Mammary epithelial cell (primary cell): ENCODE measurements at regions of chr21 and their contacts with region 1.

Region 1: DNA sequence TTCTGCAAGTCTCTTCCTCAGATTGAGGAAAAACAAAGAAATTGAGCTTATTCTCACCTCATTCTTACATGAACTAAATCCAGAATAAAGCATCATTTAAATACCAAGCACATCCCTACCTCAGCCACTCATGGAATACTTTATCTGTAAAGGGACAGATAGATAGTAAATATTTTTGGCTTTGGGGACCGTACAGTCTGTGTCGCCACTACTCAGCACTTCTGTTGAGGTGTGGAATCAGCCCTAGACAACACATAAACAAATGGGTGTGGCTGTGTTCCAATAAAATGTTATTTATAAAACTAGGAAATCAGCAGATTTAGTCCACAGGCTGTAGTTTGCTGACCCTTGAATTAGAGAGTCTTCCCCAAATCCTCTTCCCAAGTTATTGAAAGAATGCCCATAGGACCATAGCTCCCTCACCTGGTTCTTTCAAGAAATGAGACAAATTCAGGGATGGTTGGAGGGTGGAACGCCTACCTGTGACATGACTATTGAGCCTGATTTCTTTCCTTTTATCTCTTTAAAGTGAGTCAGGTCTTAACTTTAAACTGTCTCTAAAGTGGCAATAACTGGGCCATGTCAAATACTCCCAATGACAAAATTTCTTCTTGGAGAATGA is 878.5 kb downstream of the USP25 start:
- DNase-seq: peak; percentile 22
- H3K4me3 ChIP-seq: no peak overlapping the region
- H3K27ac ChIP-seq: no peak overlapping the region
- H3K4me1 ChIP-seq: no peaks in the 10 kb centered on the region
- H3K27me3 ChIP-seq: no peaks in the 10 kb centered on the region
- CTCF ChIP-seq: peak; percentile 43 to 71

Region 2: DNA sequence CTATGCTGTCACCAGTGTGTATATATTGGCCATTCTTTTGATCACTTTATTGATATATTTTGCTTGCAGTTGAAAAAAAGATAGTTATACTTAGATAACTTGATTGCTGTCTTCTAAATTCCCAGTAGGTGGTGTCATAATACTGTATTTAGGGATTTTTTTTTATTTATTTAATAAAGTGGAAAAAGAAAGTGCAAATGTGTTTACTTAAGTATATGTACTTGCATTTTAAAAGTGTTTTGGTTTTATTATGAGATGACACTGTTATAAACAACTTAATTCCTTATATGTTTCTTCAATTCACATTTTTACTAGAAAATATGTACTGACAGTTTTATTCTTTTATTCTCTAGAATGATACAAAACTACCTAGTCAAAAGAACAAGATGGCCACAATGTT is 713.7 kb before region 1 on chr21:
- CTCF ChIA-PET with region 1: no interaction called
- dilution Hi-C with region 1: no loop called
- in situ Hi-C with region 1: no loop called
- intact Hi-C with region 1: loop called (anchors 10 kb)
- DNase-seq: no peak
- H3K4me3 ChIP-seq: no peak overlapping the region
- H3K27ac ChIP-seq: no peak overlapping the region
- H3K4me1 ChIP-seq: no peaks in the 10 kb centered on the region
- H3K27me3 ChIP-seq: no peaks in the 10 kb centered on the region
- CTCF ChIP-seq: peak; percentile 37 to 45

Region 3: DNA sequence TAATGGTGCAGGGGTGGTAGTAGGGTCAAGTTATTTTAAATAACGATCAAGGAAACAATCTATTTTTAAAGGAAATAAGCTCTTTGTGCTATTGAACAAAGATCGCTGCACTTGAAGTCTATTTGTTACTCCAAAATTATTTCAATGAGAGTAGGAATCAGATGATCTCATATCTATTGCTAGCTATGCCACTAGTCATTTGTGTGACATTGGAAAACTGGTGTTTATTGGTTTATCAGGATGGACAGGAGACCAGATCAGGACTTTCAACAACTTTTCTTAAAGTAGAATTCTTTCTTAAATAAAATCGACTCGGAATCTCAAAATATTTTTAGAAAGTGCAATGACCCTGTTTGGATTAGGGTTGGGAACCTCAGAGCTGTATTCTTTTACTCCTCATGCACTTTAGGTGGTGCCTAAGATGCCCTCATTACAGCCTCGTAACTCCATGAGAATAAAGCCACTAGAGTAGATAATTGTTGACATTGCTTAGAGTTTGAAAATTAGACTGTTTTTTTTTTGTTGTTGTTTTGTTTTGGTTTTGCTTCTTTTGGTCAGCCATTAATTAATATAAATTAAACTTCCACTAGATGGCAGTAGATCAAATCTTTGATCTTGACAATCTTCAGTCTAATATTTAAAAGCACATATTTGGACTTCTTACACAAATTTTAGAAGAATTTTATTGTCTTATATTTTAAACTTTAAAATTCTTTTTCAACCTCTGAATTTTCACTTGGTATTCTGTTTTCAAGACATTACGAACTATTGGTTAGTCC is 526.1 kb before region 1 on chr21:
- CTCF ChIA-PET with region 1: no interaction called
- dilution Hi-C with region 1: no loop called
- in situ Hi-C with region 1: no loop called
- intact Hi-C with region 1: loop called (anchors 5 kb)
- DNase-seq: no peak
- H3K4me3 ChIP-seq: no peak overlapping the region
- H3K27ac ChIP-seq: no peak overlapping the region
- H3K4me1 ChIP-seq: no peaks in the 10 kb centered on the region
- H3K27me3 ChIP-seq: no peaks in the 10 kb centered on the region
- CTCF ChIP-seq: peak; percentile 13 to 33

Region 4: GRCh38 chr21:16330082-16330907 is 278.0 kb before region 1 on chr21:
- CTCF ChIA-PET with region 1: no interaction called
- dilution Hi-C with region 1: no loop called
- in situ Hi-C with region 1: no loop called
- intact Hi-C with region 1: loop called (anchors 1 kb)
- DNase-seq: peak; percentile 56
- H3K4me3 ChIP-seq: no peak overlapping the region
- H3K27ac ChIP-seq: no peak overlapping the region
- H3K4me1 ChIP-seq: no peaks in the 10 kb centered on the region
- H3K27me3 ChIP-seq: no peaks in the 10 kb centered on the region
- CTCF ChIP-seq: peak; percentile 69 to 73

Region 5: DNA sequence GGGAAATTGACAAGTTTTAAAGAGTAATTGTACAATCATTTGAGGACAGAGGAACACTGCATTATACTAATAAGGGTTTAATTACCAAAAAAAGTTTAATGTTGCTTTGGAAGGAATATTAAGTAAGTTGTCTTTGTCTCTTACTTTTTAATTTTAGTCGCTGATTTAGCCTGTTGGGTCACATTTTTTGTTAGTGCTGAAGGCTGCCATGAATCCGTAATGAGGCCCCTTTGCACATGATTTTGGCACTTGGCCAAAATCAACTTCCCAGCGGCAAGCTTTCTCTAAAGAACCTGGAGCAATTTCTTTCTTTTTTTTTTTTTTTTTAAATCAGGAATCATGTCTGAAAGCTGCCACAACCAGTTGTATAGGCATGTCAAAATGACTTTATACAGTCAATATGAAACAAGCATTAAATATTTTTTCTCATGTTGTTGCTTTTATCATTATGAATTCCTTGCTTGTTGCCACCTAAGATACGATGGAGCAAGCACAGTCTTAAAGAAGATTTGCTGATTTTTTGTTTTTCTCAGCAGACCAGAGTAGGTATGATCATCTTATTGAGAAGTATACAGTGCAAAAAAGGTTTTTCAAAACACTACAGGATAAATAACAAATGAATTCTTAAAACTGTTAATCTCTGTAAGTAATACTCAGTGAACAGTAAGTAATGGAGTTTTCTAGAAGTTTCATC is 188.1 kb before region 1 on chr21:
- CTCF ChIA-PET with region 1: no interaction called
- dilution Hi-C with region 1: no loop called
- in situ Hi-C with region 1: no loop called
- intact Hi-C with region 1: loop called (anchors 10 kb)
- DNase-seq: peak; percentile 62
- H3K4me3 ChIP-seq: peak overlapping the region; percentile 37 to 57 (median 49)
- H3K27ac ChIP-seq: peak overlapping the region; percentile 47
- H3K4me1 ChIP-seq: peaks cover 5% of the 10 kb centered on the region
- H3K27me3 ChIP-seq: no peaks in the 10 kb centered on the region
- CTCF ChIP-seq: no peak

Region 6: DNA sequence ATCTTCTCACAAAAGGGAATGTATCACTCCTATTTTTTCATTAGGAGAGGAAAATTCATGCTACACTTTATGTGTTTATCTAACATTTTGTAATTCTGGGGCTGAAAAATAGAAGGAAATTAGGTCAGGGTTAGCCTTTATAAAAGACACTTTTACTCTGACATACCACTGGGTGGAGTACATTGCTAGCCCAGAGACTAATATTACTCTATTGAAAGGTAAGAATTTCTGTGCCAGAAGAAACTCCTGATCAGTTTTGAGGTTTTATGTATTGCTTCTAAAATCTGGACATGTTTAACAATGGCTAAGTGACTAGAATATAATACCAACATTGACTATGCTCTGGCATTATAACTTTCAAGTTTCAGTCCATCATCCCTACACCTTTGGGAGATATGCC is 153.9 kb before region 1 on chr21:
- CTCF ChIA-PET with region 1: interaction called, 3 read pairs
- dilution Hi-C with region 1: no loop called
- in situ Hi-C with region 1: no loop called
- intact Hi-C with region 1: loop called (anchors 1 kb)
- DNase-seq: no peak
- H3K4me3 ChIP-seq: no peak overlapping the region
- H3K27ac ChIP-seq: no peak overlapping the region
- H3K4me1 ChIP-seq: no peaks in the 10 kb centered on the region
- H3K27me3 ChIP-seq: no peaks in the 10 kb centered on the region
- CTCF ChIP-seq: peak; percentile 12 to 52

Region 7: GRCh38 chr21:16522490-16522889 is 85.8 kb before region 1 on chr21:
- CTCF ChIA-PET with region 1: no interaction called
- dilution Hi-C with region 1: no loop called
- in situ Hi-C with region 1: no loop called
- intact Hi-C with region 1: loop called (anchors 5 kb)
- DNase-seq: no peak
- H3K4me3 ChIP-seq: no peak overlapping the region
- H3K27ac ChIP-seq: no peak overlapping the region
- H3K4me1 ChIP-seq: no peaks in the 10 kb centered on the region
- H3K27me3 ChIP-seq: no peaks in the 10 kb centered on the region
- CTCF ChIP-seq: no peak